IMR-90 (cell line): ENCODE measurements at regions of chr5 and their contacts with region 1.

Region 1: DNA sequence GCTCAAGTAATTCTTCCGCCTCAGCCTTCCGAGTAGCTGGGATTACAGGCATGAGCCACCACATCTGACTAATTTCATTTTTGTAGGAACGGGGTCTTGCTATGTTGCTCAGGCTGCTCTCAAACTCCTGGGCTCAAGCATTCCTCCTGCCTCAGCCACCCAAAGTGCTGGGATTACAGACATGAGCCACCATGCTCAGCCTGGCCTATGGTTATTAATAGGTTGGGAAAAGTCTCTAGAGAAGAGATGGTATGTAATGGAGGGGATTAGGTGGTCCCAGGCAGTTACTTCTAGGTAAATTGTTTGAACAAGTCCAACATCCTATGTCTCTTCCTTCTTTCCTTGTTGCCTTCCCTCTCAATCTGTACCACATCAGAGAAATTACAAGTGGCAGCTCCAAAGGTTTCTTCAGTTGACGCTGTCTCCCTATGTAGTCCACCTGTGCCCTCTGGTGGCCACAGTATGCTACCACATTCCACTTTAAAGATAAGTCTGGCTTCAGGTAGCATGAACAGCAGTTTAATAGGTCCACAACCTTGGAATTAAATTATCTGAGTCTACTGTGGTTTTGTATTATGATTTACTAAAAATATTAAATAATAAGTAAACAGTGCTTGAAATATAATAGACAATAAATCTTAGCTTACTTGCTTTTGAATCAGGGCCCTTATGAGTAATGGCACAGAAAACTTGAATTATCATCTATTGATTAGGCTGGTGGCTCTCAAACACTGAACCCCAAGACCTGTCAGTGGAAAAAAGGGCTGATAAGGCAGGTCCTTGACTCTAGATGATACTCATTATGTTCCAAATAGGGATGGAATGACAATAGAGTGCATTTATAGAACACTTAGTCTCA is 9.7 kb downstream of the TIGD6 start:
- DNase-seq: peak; percentile 76
- ATAC-seq: peak; percentile 93
- H3K4me3 ChIP-seq: no peak overlapping the region
- H3K27ac ChIP-seq: no peak overlapping the region
- H3K4me1 ChIP-seq: peaks cover 2% of the 10 kb centered on the region; the same call in 1 of the 2 replicates
- H3K27me3 ChIP-seq: no peaks in the 10 kb centered on the region
- CTCF ChIP-seq: peak; percentile 94
- POLR2A ChIP-seq: no peak
- RAD21 ChIP-seq: peak; percentile 94

Region 2: GRCh38 chr5:149667084-149667828 is 323.5 kb before region 1 on chr5:
- CTCF ChIA-PET with region 1: interaction called, 3 read pairs
- POLR2A ChIA-PET with region 1: no interaction called
- dilution Hi-C with region 1: no loop called
- in situ Hi-C with region 1: no loop called
- intact Hi-C with region 1: loop called (anchors 10 kb)
- DNase-seq: peak; percentile 7
- ATAC-seq: peak; percentile 53; the same call in 1 of the 2 replicates
- H3K4me3 ChIP-seq: no peak overlapping the region
- H3K27ac ChIP-seq: no peak overlapping the region
- H3K4me1 ChIP-seq: no peaks in the 10 kb centered on the region
- H3K27me3 ChIP-seq: peaks cover 12% of the 10 kb centered on the region
- CTCF ChIP-seq: peak; percentile 56
- POLR2A ChIP-seq: no peak
- RAD21 ChIP-seq: peak; percentile 41; the same call in 1 of the 2 replicates

Region 3: GRCh38 chr5:149852641-149853330 is 138.0 kb before region 1 on chr5:
- CTCF ChIA-PET with region 1: interaction called, 10 read pairs
- POLR2A ChIA-PET with region 1: no interaction called
- dilution Hi-C with region 1: no loop called
- in situ Hi-C with region 1: no loop called
- intact Hi-C with region 1: no loop called
- DNase-seq: peak; percentile 77
- ATAC-seq: peak; percentile 91
- H3K4me3 ChIP-seq: no peak overlapping the region
- H3K27ac ChIP-seq: no peak overlapping the region
- H3K4me1 ChIP-seq: peaks cover 2% of the 10 kb centered on the region; the same call in 1 of the 2 replicates
- H3K27me3 ChIP-seq: peaks cover 44% of the 10 kb centered on the region
- CTCF ChIP-seq: peak; percentile 82
- POLR2A ChIP-seq: no peak
- RAD21 ChIP-seq: peak; percentile 72

Region 4: DNA sequence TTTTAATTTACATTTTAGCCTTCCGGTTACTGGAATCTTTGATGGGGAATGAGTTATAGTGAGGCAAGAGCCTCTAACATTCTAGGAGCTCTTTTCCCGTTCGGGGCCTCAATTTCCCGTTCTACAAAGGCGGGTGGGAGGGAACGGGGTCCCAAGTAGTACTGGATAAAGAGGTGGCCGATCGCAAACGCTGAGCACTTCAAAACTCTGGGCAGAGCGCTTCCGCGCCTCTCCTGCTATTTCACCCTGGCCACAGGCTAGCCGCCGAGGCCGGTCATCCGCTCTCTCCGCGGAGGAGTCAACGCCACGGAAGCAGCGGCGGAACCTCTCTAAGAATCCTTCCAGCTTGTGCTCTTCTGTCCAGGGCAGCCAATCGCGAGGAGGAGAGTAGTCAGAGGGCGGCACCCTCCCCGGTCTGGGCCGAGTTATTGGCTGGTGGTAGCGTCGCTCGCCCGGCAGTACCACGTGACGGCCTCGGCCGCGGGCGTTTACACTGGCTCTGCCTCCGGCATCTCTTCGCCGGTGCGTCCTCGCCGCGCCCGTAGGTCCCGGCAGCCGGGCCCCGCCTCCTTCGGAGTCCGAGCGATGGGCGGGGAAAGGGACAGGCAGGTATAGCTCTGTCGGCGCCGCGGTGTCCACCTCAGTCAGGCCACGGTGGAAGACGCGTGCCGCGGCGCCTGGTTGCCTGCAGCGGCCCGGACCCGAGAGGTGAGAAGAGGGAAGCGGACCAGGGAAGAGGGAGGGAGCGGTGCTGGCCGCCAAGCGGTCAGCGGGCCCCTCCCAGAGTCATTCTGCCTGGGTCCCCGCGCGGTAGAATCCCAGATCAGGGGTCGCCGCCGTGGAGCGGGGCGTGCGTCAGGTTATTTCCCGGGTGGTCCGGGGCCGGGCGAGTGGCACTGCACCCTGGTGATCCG is 30.2 kb before region 1 on chr5 and contains the start of gene SLC26A2:
- CTCF ChIA-PET with region 1: interaction called, 7 read pairs
- POLR2A ChIA-PET with region 1: no interaction called
- dilution Hi-C with region 1: no loop called
- in situ Hi-C with region 1: no loop called
- intact Hi-C with region 1: loop called (anchors 1 kb)
- DNase-seq: peak; percentile 97
- ATAC-seq: peak; percentile 100
- H3K4me3 ChIP-seq: peak within 1 kb of the TSS; percentile 87
- H3K27ac ChIP-seq: peak within 1 kb of the TSS; percentile 70
- H3K4me1 ChIP-seq: peaks cover 6% of the 10 kb centered on the region
- H3K27me3 ChIP-seq: no peaks in the 10 kb centered on the region
- CTCF ChIP-seq: no peak
- POLR2A ChIP-seq: peak; percentile 89
- RAD21 ChIP-seq: no peak
- total RNA-seq, gene SLC26A2: 9.9 and 12.8 TPM in 2 replicates